ENCODE measurements at regions of chr16 and their contacts with region 1.

Region 1: GRCh38 chr16:84484579-84485254 is 19.7 kb downstream of the MEAK7 start:
- DNase-seq: peak in 2 of 3 donors; percentile 65 to 69
- ATAC-seq: peak; percentile 78
- H3K4me3 ChIP-seq: no peak overlapping the region
- H3K4me1 ChIP-seq: no peaks in the 10 kb centered on the region
- CTCF ChIP-seq: peak; percentile 62

Region 2: GRCh38 chr16:83967806-83968305 is 516.9 kb before region 1 on chr16 and contains the start of gene NECAB2:
- intact Hi-C with region 1: loop called in 1 of 2 experiments (anchors 10 kb)
- DNase-seq: peak in 2 of 3 donors; percentile 43 to 53
- ATAC-seq: peak; percentile 54
- H3K4me3 ChIP-seq: no peak within 1 kb of the TSS
- H3K4me1 ChIP-seq: no peaks in the 10 kb centered on the region
- CTCF ChIP-seq: peak; percentile 32
- total RNA-seq, gene NECAB2: 0.55 to 2.0 (median 0.96) TPM

Region 3: DNA sequence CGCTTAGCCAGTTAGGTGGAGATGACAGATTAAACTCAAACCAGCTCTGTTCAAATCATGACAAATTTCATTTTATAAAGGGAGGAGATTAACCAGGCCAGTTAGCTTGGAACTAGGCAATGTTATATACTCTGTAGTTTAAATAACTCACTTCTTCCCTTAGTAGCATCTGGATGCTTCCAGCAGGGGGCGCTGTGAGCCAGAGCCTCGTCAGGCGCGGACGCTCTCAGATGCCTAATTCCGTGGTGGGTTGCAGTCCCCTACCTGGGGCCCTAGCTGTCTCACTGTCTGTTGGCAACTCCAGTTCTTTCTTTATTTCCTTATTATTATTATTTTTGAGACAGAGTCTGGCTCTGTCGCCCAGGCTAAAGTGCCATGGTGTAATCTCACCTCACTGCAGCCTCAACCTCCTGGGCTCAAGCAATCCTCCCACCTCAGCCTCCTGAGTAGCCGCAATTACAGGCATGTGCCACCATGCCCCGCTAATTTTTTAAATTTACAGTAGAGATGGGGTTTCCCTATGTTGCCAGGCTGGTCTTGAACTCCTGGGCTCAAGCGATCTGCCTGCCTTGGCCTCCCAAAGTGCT is 207.4 kb before region 1 on chr16:
- intact Hi-C with region 1: loop called (anchors 5 kb)
- DNase-seq: peak; percentile 64 to 90 (median 79)
- ATAC-seq: peak; percentile 90
- H3K4me3 ChIP-seq: no peak overlapping the region
- H3K4me1 ChIP-seq: no peaks in the 10 kb centered on the region
- CTCF ChIP-seq: peak; percentile 76